WTC11 (cell line): ENCODE measurements at regions of chr12 and their contacts with region 1.

Region 1: DNA sequence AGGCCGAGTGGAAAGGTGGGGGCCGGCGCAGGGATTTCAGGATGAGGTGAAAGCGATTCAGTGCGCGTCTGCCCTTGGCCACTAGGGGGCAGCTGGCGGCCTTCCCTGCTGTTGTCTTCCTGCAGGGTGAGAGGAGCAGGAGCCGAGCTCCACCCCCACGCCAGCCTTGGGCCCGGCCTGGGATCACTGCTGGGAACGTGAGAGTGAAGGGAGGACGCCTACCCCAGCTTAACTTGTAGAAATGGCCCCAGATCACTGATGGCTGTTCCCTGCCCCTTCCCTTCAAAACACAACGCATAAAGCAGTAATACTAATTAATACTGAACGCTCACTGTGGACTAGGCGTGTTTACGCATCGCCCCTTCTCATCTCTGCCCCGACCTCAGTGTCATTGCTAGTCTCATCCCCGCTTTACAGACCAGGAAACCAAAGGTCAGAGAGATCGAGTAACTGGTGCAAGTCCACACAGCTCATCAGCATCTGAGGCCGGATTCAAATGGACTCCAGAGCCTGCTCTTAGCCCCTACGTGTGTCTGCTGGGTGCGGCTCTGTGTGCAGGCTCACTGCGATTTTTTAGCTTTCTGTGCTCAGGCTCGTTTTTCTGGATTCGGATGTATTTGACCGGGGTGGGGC is 24.3 kb downstream of the MVK start:
- DNase-seq: peak; percentile 96
- ATAC-seq: peak; percentile 93
- H3K4me3 Mint-ChIP-seq: no peak overlapping the region
- H3K27ac Mint-ChIP-seq: peak overlapping the region; percentile 32; the same call in 1 of the 2 replicates
- H3K4me1 Mint-ChIP-seq: peaks cover 15% of the 10 kb centered on the region
- H3K27me3 Mint-ChIP-seq: no peaks in the 10 kb centered on the region
- CTCF ChIP-seq: peak; percentile 92

Region 2: DNA sequence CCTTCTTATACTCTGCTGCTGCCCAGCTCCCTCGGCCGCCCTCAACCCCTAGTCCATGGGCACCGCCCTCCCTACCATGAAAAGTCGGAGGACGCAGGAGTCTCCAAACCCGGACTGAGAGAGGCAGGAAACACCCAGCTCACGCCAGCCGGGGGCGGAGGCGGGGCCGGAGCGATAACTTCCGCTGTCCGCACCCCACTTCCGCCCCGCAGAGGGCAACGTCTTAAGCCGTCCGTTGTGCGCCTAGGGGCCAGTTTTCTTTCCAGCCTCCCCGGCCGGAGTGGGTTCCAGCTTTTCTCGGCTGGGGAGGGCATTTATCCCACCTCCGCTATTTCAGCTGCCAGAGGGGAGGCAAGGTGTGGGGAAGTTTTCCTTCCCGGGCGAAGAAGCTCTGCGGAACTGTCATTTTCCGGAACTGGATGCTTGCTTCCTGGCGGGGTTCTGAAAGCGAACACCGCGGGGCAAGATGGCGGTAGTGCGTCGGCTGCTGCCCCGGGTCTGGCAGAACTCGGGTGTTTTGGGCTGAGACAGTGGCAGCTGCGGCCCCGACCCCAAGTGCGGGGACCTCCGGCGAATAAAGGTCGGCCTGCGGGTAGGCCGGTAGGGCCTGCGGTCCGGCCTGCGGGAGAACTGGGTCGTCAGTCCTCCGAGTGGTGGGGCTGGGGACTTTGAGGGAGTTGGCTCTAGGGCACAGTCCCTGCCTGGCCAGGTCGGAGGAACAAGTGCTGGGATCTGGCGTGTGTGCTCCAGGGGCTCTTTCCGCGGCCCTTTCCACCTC is 120.5 kb before region 1 on chr12 and contains the starts of genes KCTD10 and UBE3B:
- CTCF ChIA-PET with region 1: no interaction called
- POLR2A ChIA-PET with region 1: no interaction called
- DNase-seq: peak; percentile 89
- ATAC-seq: peak; percentile 88
- H3K4me3 Mint-ChIP-seq: peak within 1 kb of the TSS; percentile 94
- H3K27ac Mint-ChIP-seq: peak within 1 kb of the TSS; percentile 99
- H3K4me1 Mint-ChIP-seq: peaks cover 30% of the 10 kb centered on the region
- H3K27me3 Mint-ChIP-seq: no peaks in the 10 kb centered on the region
- CTCF ChIP-seq: no peak
- total RNA-seq, gene KCTD10: 35.1 to 44.7 TPM (median 37.6 TPM) in 3 replicates
- total RNA-seq, gene UBE3B: 28.9 to 32.2 TPM (median 29.3 TPM) in 3 replicates

Region 3: GRCh38 chr12:109544955-109545531 is 52.9 kb before region 1 on chr12:
- CTCF ChIA-PET with region 1: no interaction called
- POLR2A ChIA-PET with region 1: no interaction called
- DNase-seq: no peak
- ATAC-seq: no peak
- H3K4me3 Mint-ChIP-seq: no peak overlapping the region
- H3K27ac Mint-ChIP-seq: 0 out of 2 replicates have a peak overlapping the region, but pooled peaks have one; percentile 60
- H3K4me1 Mint-ChIP-seq: no peaks in the 10 kb centered on the region
- H3K27me3 Mint-ChIP-seq: no peaks in the 10 kb centered on the region; the same call in 1 of the 2 replicates
- CTCF ChIP-seq: no peak

Region 4: DNA sequence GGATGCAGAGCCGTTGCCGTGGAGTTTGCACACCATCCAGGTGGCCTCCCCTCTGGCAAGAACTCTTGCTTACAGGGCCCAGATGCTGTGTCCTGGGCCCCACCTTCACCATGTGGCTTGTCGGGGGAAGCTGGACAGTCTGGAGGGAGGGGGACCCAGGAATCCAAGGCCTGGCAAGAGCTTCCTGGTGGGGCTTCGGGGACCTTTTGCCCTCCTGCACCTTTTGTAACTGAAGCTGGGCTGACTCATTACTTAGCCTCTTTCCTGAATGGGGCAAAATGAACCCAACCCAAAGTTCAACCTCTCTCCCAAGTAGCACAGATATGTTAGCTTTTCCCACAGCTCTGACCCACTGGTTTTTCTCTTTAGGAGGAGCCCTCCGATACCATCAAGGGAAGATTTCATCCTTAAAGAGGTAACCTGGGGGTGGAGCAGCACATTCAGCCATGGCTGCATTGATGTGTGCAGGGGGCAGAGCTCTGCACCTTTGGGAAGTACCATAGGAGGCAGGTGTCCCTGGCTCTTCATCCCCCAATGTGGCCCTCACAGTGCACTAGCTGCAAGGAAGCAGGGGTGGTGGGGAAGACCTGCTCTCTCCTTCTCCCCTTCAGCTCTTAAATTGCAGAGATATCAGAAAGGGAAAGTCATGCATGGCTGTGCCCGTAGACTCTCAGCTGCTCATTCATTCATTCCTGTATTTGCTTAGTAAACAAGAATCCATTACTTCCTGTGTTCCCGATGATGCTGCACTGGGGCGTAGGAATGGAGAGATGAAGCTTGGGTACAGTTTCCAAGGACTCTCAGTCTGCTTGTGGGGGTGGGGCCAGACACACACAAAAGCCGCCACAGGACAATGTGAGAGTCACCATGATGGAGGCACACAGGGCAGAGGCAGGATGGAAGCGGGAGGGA is 11.3 kb before region 1 on chr12:
- CTCF ChIA-PET with region 1: interaction called, 13 read pairs
- POLR2A ChIA-PET with region 1: no interaction called
- DNase-seq: no peak
- ATAC-seq: no peak
- H3K4me3 Mint-ChIP-seq: no peak overlapping the region
- H3K27ac Mint-ChIP-seq: no peak overlapping the region
- H3K4me1 Mint-ChIP-seq: no peaks in the 10 kb centered on the region
- H3K27me3 Mint-ChIP-seq: no peaks in the 10 kb centered on the region
- CTCF ChIP-seq: no peak

Region 5: DNA sequence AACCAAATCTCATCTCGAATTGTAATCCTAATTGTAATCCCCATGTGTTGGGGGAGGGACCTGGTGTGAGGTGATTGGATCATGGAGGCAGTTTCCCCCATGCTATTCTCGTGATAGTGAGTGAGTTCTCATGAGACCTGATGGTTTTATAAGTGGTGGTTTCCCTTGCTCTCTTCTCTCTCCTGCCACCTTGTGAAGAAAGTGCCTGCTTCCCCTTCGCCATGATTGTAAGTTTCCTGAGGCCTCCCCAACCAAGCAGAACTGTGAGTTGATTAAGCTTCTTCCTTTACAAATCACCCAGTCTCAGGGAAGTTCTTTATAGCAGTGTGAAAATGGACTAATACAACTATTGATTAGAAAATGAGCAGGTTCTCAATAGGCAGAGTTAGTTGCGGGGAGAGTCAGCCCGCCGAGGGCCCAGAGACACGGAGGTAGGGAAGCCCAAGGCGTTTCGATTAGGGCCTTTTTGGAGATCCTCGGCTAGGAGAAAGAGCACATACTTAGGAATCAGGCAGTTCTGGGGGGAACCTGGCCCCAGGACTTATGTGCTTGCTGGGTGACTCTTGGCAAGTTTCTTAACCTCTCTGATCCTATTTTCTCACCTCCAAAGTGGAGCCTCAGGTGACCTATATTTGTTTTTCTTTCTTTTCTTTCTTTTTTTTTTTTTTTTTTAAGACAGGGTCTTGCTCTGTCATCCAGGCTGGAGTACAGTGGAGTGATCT is 41.4 kb after region 1 on chr12:
- CTCF ChIA-PET with region 1: interaction called, 14 read pairs
- POLR2A ChIA-PET with region 1: no interaction called
- DNase-seq: no peak
- ATAC-seq: no peak
- H3K4me3 Mint-ChIP-seq: no peak overlapping the region
- H3K27ac Mint-ChIP-seq: no peak overlapping the region
- H3K4me1 Mint-ChIP-seq: peaks cover 6% of the 10 kb centered on the region
- H3K27me3 Mint-ChIP-seq: no peaks in the 10 kb centered on the region
- CTCF ChIP-seq: no peak

Region 6: DNA sequence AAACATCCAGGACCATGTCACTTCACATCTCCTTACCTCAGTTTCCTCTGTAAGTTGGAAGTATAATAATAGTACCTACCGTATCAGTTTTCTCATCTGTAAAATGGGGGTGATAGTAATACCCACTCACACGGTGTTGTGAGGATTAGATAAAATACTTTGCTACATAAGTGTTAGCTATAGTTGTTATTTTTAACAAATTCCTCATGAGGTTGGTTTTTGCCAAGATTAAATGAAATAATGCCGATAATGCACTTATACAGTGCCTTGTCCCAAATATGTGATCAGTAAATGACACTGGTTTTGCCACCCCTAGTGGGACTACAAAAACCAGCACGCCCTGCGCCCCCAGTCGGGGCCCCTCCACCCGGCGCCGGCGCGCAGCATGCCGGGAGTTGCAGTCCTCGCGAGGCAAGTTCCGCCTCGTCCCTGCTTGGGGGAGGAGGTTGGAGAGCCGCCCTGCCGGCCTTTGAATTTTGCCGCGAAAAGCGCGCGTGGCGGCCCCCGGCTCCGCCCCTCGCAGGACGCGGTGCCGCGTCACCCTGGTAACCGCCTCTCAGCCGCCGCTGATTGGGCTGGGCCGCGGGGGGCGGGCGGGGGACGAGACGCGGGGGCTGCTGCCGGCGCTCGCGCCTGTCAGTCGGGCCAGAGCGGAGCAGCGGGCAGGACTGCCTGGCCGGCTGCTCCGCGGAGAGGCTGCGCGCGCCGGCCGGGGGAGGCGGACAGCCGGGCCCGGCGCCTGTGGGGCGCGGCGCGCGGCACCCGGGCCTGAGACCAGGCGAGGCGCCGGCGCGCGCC is 115.5 kb after region 1 on chr12 and contains the start of gene FAM222A:
- CTCF ChIA-PET with region 1: interaction called, 45 read pairs
- POLR2A ChIA-PET with region 1: no interaction called
- DNase-seq: peak; percentile 96
- ATAC-seq: peak; percentile 74
- H3K4me3 Mint-ChIP-seq: peak within 1 kb of the TSS; percentile 60
- H3K27ac Mint-ChIP-seq: no peak within 1 kb of the TSS
- H3K4me1 Mint-ChIP-seq: peaks cover 32% of the 10 kb centered on the region
- H3K27me3 Mint-ChIP-seq: peaks cover 51% of the 10 kb centered on the region
- CTCF ChIP-seq: no peak
- total RNA-seq, gene FAM222A: 1.3 to 1.6 TPM (median 1.6 TPM) in 3 replicates

Region 7: GRCh38 chr12:109736552-109737108 is 138.7 kb after region 1 on chr12:
- CTCF ChIA-PET with region 1: interaction called, 37 read pairs
- POLR2A ChIA-PET with region 1: no interaction called
- DNase-seq: peak; percentile 87
- ATAC-seq: peak; percentile 77
- H3K4me3 Mint-ChIP-seq: no peak overlapping the region
- H3K27ac Mint-ChIP-seq: no peak overlapping the region
- H3K4me1 Mint-ChIP-seq: peaks cover 34% of the 10 kb centered on the region
- H3K27me3 Mint-ChIP-seq: no peaks in the 10 kb centered on the region
- CTCF ChIP-seq: no peak

Region 8: GRCh38 chr12:109775172-109775881 is 177.4 kb after region 1 on chr12:
- CTCF ChIA-PET with region 1: interaction called, 108 read pairs
- POLR2A ChIA-PET with region 1: no interaction called
- DNase-seq: peak; percentile 87
- ATAC-seq: peak; percentile 86
- H3K4me3 Mint-ChIP-seq: no peak overlapping the region
- H3K27ac Mint-ChIP-seq: no peak overlapping the region
- H3K4me1 Mint-ChIP-seq: peaks cover 20% of the 10 kb centered on the region
- H3K27me3 Mint-ChIP-seq: no peaks in the 10 kb centered on the region
- CTCF ChIP-seq: peak; percentile 67

Region 9: GRCh38 chr12:109880016-109880931 is 282.4 kb after region 1 on chr12 and contains the start of gene GLTP:
- CTCF ChIA-PET with region 1: no interaction called
- POLR2A ChIA-PET with region 1: no interaction called
- DNase-seq: peak; percentile 87
- ATAC-seq: peak; percentile 93
- H3K4me3 Mint-ChIP-seq: peak within 1 kb of the TSS; percentile 94
- H3K27ac Mint-ChIP-seq: peak within 1 kb of the TSS; percentile 93
- H3K4me1 Mint-ChIP-seq: peaks cover 51% of the 10 kb centered on the region
- H3K27me3 Mint-ChIP-seq: peaks cover 17% of the 10 kb centered on the region
- CTCF ChIP-seq: no peak
- total RNA-seq, gene GLTP: 21.6 to 25.8 TPM (median 22.8 TPM) in 3 replicates